Mammary epithelial cell (primary cell): ENCODE measurements at regions of chr5 and their contacts with region 1.

Region 1: DNA sequence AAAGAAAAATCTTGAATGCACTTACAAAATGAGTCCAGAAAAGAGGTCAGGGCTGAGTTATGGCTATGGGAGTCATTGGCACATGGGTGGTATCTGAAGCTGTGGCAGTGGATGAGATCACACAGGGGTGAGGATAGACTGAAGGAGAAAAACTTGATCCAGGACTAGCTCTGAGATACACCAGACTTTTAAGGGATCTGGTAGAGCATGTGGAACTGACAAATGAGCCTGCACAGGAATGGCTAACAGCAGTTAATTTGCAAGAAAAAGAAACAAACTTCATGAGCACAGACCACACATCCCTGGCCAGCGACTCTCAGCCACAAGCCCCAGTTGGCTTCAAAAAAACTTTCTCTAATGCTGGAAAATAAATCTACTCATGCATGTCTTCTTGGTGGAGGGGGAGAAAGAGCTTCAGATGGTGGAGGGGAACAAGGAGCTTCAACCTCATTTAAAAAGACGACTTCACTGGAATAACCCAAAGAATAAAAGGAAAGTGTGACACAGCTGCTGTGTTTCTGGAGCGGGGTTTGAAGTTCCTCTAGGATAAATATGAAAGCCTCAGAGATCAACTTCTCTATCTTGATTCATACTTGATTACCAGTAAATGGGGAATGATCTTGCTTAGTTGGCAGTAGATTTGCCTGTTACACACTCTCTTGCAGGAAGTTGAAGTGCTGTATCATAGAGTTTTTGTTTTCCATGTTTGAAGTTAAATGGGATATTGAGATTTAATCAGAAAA is 33.6 kb downstream of the TNFAIP8 start:
- DNase-seq: no peak
- H3K4me3 ChIP-seq: no peak overlapping the region
- H3K27ac ChIP-seq: no peak overlapping the region
- H3K4me1 ChIP-seq: peaks cover 17% of the 10 kb centered on the region
- H3K27me3 ChIP-seq: no peaks in the 10 kb centered on the region
- CTCF ChIP-seq: no peak

Region 2: GRCh38 chr5:119360905-119361593 is 28.4 kb before region 1 on chr5:
- CTCF ChIA-PET with region 1: no interaction called
- dilution Hi-C with region 1: no loop called
- in situ Hi-C with region 1: no loop called
- intact Hi-C with region 1: loop called (anchors 2 kb)
- DNase-seq: peak; percentile 91
- H3K4me3 ChIP-seq: peak overlapping the region in 1 of 3 experiments; percentile 2
- H3K27ac ChIP-seq: peak overlapping the region; percentile 81
- H3K4me1 ChIP-seq: peaks cover 74% of the 10 kb centered on the region
- H3K27me3 ChIP-seq: no peaks in the 10 kb centered on the region
- CTCF ChIP-seq: no peak

Region 3: GRCh38 chr5:119743927-119744326 is 354.5 kb after region 1 on chr5:
- CTCF ChIA-PET with region 1: no interaction called
- dilution Hi-C with region 1: no loop called
- in situ Hi-C with region 1: no loop called
- intact Hi-C with region 1: no loop called
- DNase-seq: peak; percentile 53
- H3K4me3 ChIP-seq: no peak overlapping the region
- H3K27ac ChIP-seq: no peak overlapping the region
- H3K4me1 ChIP-seq: peaks cover 5% of the 10 kb centered on the region
- H3K27me3 ChIP-seq: no peaks in the 10 kb centered on the region
- CTCF ChIP-seq: peak; percentile 60 to 67